Naive thymus-derived CD4-positive, alpha-beta T cell (primary cell): ENCODE measurements at regions of chr1 and their contacts with region 1.

Region 1: GRCh38 chr1:150067184-150068036 is at the start of gene VPS45:
- DNase-seq: peak; percentile 53 to 85 (median 70)
- ATAC-seq: peak; percentile 96
- H3K4me3 ChIP-seq: peak within 1 kb of the TSS; percentile 72
- H3K4me3 Mint-ChIP-seq: peak within 1 kb of the TSS; percentile 91 to 95 (median 94)
- H3K27ac ChIP-seq: peak within 1 kb of the TSS; percentile 63
- H3K27ac Mint-ChIP-seq: peak within 1 kb of the TSS; percentile 88 to 96 (median 92)
- H3K4me1 ChIP-seq: peaks cover 0 to 8% of the 10 kb centered on the region in 2 donors
- H3K4me1 Mint-ChIP-seq: peaks cover 16 to 46% (median 37%) of the 10 kb centered on the region in 7 donors
- H3K27me3 ChIP-seq: no peaks in the 10 kb centered on the region
- H3K27me3 Mint-ChIP-seq: peaks cover 0 to 3% (median 0%) of the 10 kb centered on the region in 5 donors
- total RNA-seq, gene VPS45: 20.3 to 37.7 (median 29.3) TPM

Region 2: DNA sequence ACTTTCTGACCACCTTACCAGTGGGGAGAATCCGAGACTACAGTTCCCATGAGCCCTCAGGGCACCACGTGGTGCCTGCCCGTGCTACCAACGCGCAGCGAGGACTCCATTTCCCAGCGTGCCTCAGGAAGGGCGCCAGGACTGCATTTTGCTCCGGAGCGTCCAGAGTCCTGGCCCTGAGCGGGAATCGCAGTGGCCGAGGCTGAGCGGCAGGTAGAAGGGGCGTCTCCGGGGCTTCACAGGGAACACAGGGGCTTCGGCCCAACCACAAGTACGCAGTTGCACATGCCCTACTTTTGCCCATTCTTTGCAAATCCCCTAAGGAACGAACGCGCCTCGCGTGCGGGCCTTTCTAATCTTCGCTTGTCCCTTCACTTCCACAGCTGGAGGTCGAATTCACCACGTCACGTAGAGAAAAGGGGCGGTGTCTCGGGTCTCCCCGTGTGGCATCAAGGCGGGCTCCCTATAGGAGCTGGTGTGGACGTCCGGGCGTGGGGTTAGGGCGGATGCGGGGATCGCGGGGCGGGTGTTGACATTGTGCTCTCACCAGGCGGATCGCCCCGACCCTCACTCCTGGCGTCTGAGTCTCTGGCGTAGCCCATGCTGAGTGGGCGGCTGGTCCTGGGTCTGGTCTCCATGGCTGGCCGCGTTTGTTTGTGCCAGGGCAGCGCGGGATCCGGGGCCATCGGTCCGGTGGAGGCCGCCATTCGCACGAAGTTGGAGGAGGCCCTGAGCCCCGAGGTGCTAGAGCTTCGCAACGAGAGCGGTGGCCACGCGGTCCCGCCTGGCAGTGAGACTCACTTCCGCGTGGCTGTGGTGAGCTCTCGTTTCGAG is 167.7 kb before region 1 on chr1 and contains the start of gene BOLA1:
- CTCF ChIA-PET with region 1: no interaction called
- POLR2A ChIA-PET with region 1: no interaction called
- intact Hi-C with region 1: loop called in 1 of 2 experiments (anchors 1 kb)
- DNase-seq: peak; percentile 59 to 83 (median 71)
- ATAC-seq: peak; percentile 99
- H3K4me3 ChIP-seq: peak within 1 kb of the TSS; percentile 91
- H3K4me3 Mint-ChIP-seq: peak within 1 kb of the TSS; percentile 85 to 97 (median 90)
- H3K27ac ChIP-seq: peak within 1 kb of the TSS; percentile 85
- H3K27ac Mint-ChIP-seq: peak within 1 kb of the TSS; percentile 86 to 96 (median 93)
- H3K4me1 ChIP-seq: peaks cover 0 to 6% of the 10 kb centered on the region in 2 donors
- H3K4me1 Mint-ChIP-seq: peaks cover 11 to 27% (median 20%) of the 10 kb centered on the region in 7 donors
- H3K27me3 ChIP-seq: no peaks in the 10 kb centered on the region
- H3K27me3 Mint-ChIP-seq: no peaks in the 10 kb centered on the region
- total RNA-seq, gene BOLA1: 7.8 to 28.9 (median 18.2) TPM

Region 3: DNA sequence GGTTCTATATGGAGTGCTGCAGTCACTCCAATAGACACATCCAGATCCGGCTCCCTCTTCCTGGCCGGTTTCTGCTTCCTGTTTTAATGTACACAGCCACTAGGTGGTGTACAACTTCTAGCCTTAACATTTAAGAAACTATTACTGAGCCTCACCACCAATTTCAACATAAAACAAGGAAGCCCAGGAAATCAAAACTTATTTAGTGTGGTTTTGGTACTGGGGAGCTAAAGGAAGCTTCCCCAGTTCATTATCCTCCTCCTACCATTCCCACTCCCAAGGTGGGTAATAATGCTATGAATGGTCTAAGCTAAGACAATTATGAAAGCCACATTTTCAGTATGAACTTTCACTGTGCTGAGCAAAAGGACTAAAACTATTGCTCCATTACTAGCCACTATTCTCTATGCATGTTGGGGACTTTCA is 105.3 kb before region 1 on chr1:
- CTCF ChIA-PET with region 1: interaction called, 3 read pairs
- POLR2A ChIA-PET with region 1: no interaction called
- intact Hi-C with region 1: loop called (anchors 1 kb)
- DNase-seq: peak in 7 of 9 donors; percentile 39 to 62 (median 57)
- ATAC-seq: peak; percentile 88
- H3K4me3 ChIP-seq: no peak overlapping the region
- H3K4me3 Mint-ChIP-seq: no peak overlapping the region
- H3K27ac ChIP-seq: no peak overlapping the region
- H3K27ac Mint-ChIP-seq: peak overlapping the region in 3 of 9 donors; percentile 45 to 71 (median 64)
- H3K4me1 ChIP-seq: no peaks in the 10 kb centered on the region
- H3K4me1 Mint-ChIP-seq: peaks cover 6 to 24% (median 19%) of the 10 kb centered on the region in 7 donors
- H3K27me3 ChIP-seq: no peaks in the 10 kb centered on the region
- H3K27me3 Mint-ChIP-seq: no peaks in the 10 kb centered on the region

Region 4: GRCh38 chr1:150106341-150106740 is 38.9 kb after region 1 on chr1:
- CTCF ChIA-PET with region 1: interaction called, 5 read pairs
- POLR2A ChIA-PET with region 1: interaction called, 6 read pairs
- intact Hi-C with region 1: loop called in 1 of 2 experiments (anchors 2 kb)
- DNase-seq: peak in 7 of 9 donors; percentile 29 to 67 (median 56)
- ATAC-seq: peak; percentile 85
- H3K4me3 ChIP-seq: no peak overlapping the region
- H3K4me3 Mint-ChIP-seq: peak overlapping the region; percentile 55 to 86 (median 75)
- H3K27ac ChIP-seq: peak overlapping the region; percentile 62
- H3K27ac Mint-ChIP-seq: peak overlapping the region; percentile 79 to 96 (median 94)
- H3K4me1 ChIP-seq: peaks cover 36 to 48% of the 10 kb centered on the region in 2 donors
- H3K4me1 Mint-ChIP-seq: peaks cover 44 to 91% (median 85%) of the 10 kb centered on the region in 7 donors
- H3K27me3 ChIP-seq: no peaks in the 10 kb centered on the region
- H3K27me3 Mint-ChIP-seq: no peaks in the 10 kb centered on the region

Region 5: GRCh38 chr1:150162862-150163706 is 95.7 kb after region 1 on chr1:
- CTCF ChIA-PET with region 1: interaction called, 243 read pairs
- POLR2A ChIA-PET with region 1: interaction called, 20 read pairs
- intact Hi-C with region 1: no loop called
- DNase-seq: no peak
- ATAC-seq: peak; percentile 76
- H3K4me3 ChIP-seq: no peak overlapping the region
- H3K4me3 Mint-ChIP-seq: peak overlapping the region; percentile 12 to 72 (median 55)
- H3K27ac ChIP-seq: no peak overlapping the region
- H3K27ac Mint-ChIP-seq: peak overlapping the region in 8 of 9 donors; percentile 14 to 85 (median 58)
- H3K4me1 ChIP-seq: peaks cover 0 to 31% of the 10 kb centered on the region in 2 donors
- H3K4me1 Mint-ChIP-seq: peaks cover 39 to 73% (median 51%) of the 10 kb centered on the region in 7 donors
- H3K27me3 ChIP-seq: no peaks in the 10 kb centered on the region
- H3K27me3 Mint-ChIP-seq: peaks cover 0 to 9% (median 0%) of the 10 kb centered on the region in 5 donors

Region 6: DNA sequence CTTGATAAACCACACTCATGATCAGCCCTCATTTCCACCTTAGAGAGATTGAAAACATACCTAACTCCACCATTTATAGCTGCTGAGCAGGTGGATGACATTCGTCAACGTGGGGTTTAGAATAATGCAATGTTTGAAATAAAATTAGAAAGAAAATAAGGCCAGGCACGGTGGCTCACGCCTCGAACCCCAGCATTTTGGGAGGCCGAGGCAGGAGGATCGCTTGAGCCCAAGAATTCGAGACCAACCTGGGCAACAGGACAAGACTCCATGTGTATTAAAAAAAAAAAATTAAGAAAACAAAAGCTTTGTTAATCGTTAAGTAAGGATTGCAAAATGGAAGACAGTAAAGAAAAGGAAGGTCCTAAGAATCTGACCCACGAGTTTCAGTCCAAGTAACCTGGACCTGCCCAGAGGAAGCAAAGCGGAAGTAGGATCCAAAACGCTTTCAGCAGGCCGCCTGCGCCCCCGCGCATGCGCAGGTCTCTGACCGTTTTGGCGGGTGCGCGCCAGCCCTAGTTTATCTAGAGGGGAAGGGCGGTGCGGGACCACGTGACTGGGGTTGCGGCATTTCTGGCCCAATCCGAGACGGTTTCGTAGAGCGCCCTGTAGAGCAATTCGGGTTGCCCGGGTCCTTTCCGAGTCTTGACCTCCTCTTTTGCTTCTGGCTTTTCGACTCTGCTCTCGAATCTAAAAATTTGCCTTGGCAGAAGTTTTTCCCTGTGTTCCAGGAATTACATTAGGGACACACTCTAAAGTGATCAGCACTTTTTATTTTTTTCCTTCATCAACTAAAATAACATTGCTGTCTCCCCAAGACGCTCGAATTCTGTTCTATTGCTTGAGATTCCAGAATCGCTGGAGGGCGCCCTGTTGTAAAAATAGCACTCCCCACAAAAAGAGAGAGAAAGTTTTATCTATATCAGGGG is 146.0 kb after region 1 on chr1:
- CTCF ChIA-PET with region 1: interaction called, 3 read pairs
- POLR2A ChIA-PET with region 1: no interaction called
- intact Hi-C with region 1: loop called in 1 of 2 experiments (anchors 1 kb)
- DNase-seq: peak; percentile 72 to 92 (median 88)
- ATAC-seq: peak; percentile 100
- H3K4me3 ChIP-seq: peak overlapping the region; percentile 59
- H3K4me3 Mint-ChIP-seq: peak overlapping the region; percentile 75 to 95 (median 92)
- H3K27ac ChIP-seq: peak overlapping the region; percentile 69
- H3K27ac Mint-ChIP-seq: peak overlapping the region; percentile 84 to 98 (median 97)
- H3K4me1 ChIP-seq: peaks cover 6% of the 10 kb centered on the region in 2 donors
- H3K4me1 Mint-ChIP-seq: peaks cover 5 to 19% (median 18%) of the 10 kb centered on the region in 7 donors
- H3K27me3 ChIP-seq: no peaks in the 10 kb centered on the region
- H3K27me3 Mint-ChIP-seq: peaks cover 0 to 11% (median 0%) of the 10 kb centered on the region in 5 donors

Region 7: DNA sequence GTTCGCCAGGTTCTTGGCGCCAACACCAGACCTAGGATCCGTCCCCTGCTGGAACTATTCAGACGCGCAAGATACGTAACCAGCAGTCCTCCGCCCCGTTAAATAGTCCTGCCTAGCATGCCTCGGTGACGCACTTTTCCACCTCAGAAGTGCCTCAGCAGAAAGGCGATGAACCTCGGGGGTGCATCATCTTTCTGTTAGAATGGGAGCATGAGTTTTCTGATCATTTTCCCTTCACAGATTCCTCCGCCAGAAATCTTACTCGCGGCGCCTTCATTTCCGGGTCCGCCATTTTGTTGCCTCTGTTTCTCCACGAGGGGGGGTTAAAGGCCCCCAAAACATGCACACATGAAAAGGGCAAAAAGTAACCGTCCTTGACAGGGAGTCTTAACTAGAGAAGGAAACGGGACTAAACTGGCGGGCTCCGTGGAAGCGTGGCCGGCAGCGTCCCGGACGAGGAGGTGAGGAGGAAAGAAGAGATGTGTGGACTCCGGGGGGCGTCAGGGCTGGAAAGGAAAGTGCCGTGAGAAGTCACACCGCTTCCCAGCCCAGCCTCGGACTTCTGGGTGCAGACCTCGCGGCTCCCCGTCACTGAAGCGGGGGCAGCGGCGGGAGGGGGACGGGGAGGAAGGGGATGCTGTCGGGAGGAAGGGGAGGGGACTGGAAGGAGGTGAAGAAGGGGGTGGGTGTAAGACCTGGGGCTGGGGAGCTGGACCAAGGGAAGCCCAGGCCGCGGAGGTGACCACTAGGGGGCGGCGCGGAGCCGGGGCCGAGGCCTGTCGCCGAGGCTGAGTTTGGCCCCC is 1003.3 kb after region 1 on chr1 and contains the start of gene GABPB2:
- CTCF ChIA-PET with region 1: no interaction called
- POLR2A ChIA-PET with region 1: no interaction called
- intact Hi-C with region 1: no loop called
- DNase-seq: peak; percentile 78 to 94 (median 89)
- ATAC-seq: peak; percentile 91
- H3K4me3 ChIP-seq: peak within 1 kb of the TSS; percentile 99
- H3K4me3 Mint-ChIP-seq: peak within 1 kb of the TSS; percentile 94 to 100 (median 99)
- H3K27ac ChIP-seq: peak within 1 kb of the TSS; percentile 94
- H3K27ac Mint-ChIP-seq: peak within 1 kb of the TSS; percentile 97 to 100 (median 100)
- H3K4me1 ChIP-seq: peaks cover 8 to 9% of the 10 kb centered on the region in 2 donors
- H3K4me1 Mint-ChIP-seq: peaks cover 5 to 37% (median 29%) of the 10 kb centered on the region in 7 donors
- H3K27me3 ChIP-seq: no peaks in the 10 kb centered on the region
- H3K27me3 Mint-ChIP-seq: peaks cover 0 to 2% (median 0%) of the 10 kb centered on the region in 5 donors
- total RNA-seq, gene GABPB2: 13.7 to 42.2 (median 32.2) TPM